SK-N-SH (cell line): ENCODE measurements at regions of chr2 and their contacts with region 1.

Region 1: GRCh38 chr2:950080-950966 is at the start of gene SNTG2:
- DNase-seq: peak; percentile 97
- H3K4me3 ChIP-seq: peak within 1 kb of the TSS in 1 of 2 experiments; percentile 49; a peak in 2 of 4 replicates
- H3K27ac ChIP-seq: no peak within 1 kb of the TSS
- H3K4me1 ChIP-seq: peaks cover 0 to 6% of the 10 kb centered on the region in 2 experiments; a peak in 1 of 4 replicates
- H3K27me3 ChIP-seq: no peaks in the 10 kb centered on the region
- CTCF ChIP-seq: no peak
- EP300 ChIP-seq: no peak
- RAD21 ChIP-seq: no peak
- polyA plus RNA-seq, gene SNTG2: not detected in 2 replicates

Region 2: GRCh38 chr2:1051064-1051983 is 101.0 kb after region 1 on chr2:
- CTCF ChIA-PET with region 1: interaction called, 13 read pairs
- POLR2A ChIA-PET with region 1: no interaction called
- DNase-seq: peak; percentile 44
- H3K4me3 ChIP-seq: no peak overlapping the region; a peak in 1 of 4 replicates
- H3K27ac ChIP-seq: no peak overlapping the region
- H3K4me1 ChIP-seq: peaks cover 0 to 19% of the 10 kb centered on the region in 2 experiments; a peak in 2 of 4 replicates
- H3K27me3 ChIP-seq: no peaks in the 10 kb centered on the region
- CTCF ChIP-seq: no peak; the same call in 1 of the 2 replicates
- EP300 ChIP-seq: no peak
- RAD21 ChIP-seq: no peak; the same call in none of the 2 replicates

Region 3: GRCh38 chr2:1070616-1071015 is 120.3 kb after region 1 on chr2:
- CTCF ChIA-PET with region 1: interaction called, 12 read pairs
- POLR2A ChIA-PET with region 1: no interaction called
- DNase-seq: peak; percentile 76
- H3K4me3 ChIP-seq: no peak overlapping the region; a peak in 1 of 4 replicates
- H3K27ac ChIP-seq: no peak overlapping the region
- H3K4me1 ChIP-seq: peaks cover 0 to 8% of the 10 kb centered on the region in 2 experiments; a peak in 2 of 4 replicates
- H3K27me3 ChIP-seq: no peaks in the 10 kb centered on the region
- CTCF ChIP-seq: no peak
- EP300 ChIP-seq: peak in 1 of 2 experiments; percentile 37; a peak in 1 of 4 replicates
- RAD21 ChIP-seq: peak; percentile 63

Region 4: DNA sequence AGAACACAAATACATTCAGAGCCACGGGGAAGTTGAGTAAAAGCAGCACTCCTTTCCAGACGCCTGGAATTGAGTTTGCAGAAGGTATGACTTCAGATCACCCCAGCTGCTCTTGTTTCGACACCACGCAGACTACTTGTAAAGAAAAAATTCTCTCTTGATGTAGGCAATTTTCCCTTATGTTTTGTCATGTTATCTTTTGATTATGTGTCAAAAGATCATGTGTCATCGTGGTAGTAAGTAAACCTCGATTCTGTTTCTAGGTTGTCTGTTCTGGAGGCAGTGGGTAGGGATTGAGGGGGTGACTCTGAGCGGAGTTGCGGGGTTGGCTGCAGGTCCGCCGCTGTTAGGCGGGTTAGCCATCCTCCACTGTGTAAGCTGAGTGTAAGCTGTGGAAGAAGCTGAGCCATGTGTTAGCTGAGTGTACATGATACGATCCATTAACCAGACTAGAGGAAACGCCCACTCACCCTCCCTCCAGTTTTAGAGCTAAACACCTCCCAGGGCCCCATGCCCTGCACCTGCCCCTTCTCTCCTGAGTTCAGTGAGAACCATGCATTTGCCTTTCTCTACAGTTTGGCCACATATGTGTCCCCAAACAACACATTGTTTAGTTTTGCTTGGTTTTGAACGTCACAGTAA is 182.1 kb after region 1 on chr2:
- CTCF ChIA-PET with region 1: interaction called, 32 read pairs
- POLR2A ChIA-PET with region 1: no interaction called
- DNase-seq: no peak
- H3K4me3 ChIP-seq: no peak overlapping the region
- H3K27ac ChIP-seq: no peak overlapping the region
- H3K4me1 ChIP-seq: peaks cover 0 to 8% of the 10 kb centered on the region in 2 experiments; a peak in 1 of 4 replicates
- H3K27me3 ChIP-seq: no peaks in the 10 kb centered on the region
- CTCF ChIP-seq: no peak
- EP300 ChIP-seq: no peak
- RAD21 ChIP-seq: no peak

Region 5: DNA sequence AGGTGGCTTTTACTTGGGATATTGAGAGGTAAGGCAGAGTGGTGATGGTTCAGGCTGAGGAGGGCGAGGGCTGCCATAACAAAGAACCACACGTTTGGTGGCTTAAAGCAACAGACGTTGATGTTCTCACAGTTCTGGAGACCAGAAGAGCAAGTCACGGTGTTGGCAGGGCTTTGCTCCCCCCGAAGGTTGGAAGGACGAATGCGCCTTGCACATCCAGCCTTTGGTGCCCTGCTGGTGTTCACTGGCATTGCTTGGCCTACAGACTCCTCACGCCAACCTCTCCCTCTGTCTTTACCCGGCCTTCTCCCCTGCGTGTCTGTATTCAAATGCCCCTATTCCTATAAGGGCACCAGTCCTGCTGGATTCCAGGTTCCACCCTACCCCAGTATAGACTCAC is 588.3 kb after region 1 on chr2:
- CTCF ChIA-PET with region 1: interaction called, 12 read pairs
- POLR2A ChIA-PET with region 1: no interaction called
- DNase-seq: peak; percentile 79
- H3K4me3 ChIP-seq: no peak overlapping the region
- H3K27ac ChIP-seq: no peak overlapping the region
- H3K4me1 ChIP-seq: peaks cover 0 to 23% of the 10 kb centered on the region in 2 experiments; a peak in 2 of 4 replicates
- H3K27me3 ChIP-seq: no peaks in the 10 kb centered on the region
- CTCF ChIP-seq: peak; percentile 57
- EP300 ChIP-seq: no peak
- RAD21 ChIP-seq: peak; percentile 62